ENCODE measurements at regions of chr5 and their contacts with region 1.

Region 1: GRCh38 chr5:160508780-160509361 is 87.2 kb downstream of the PTTG1 start:
- DNase-seq: no peak

Region 2: GRCh38 chr5:160439205-160439600 is 69.7 kb before region 1 on chr5:
- intact Hi-C with region 1: loop called (anchors 5 kb)
- DNase-seq: peak; percentile 93

Measured in cardiac septum (tissue), 1 donor.